Aorta (tissue), 5 donors: ENCODE measurements at regions of chr17 and their contacts with region 1.

Region 1: DNA sequence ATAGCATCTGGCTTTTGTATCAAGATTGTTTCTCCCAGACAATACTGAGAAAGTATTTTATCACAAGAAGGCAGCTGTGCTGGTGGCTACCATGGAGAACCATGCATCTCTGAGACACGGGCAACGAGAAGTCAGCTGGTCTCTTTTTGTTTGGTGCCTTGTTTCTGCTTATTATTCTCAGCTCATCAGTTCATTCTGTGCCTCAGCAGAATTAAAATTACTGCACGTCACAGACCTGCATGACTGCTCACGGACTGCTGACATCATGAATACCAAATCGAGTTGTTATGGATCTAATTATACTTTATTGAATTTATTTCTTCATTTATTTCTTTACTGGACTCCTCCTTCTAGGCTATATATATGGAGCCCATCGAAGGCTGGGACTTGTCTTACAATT is 19.0 kb upstream of the PMP22 start:
- DNase-seq: no peak
- ATAC-seq: no peak
- H3K4me3 ChIP-seq: no peak overlapping the region
- H3K27ac ChIP-seq: no peak overlapping the region
- H3K4me1 ChIP-seq: no peaks in the 10 kb centered on the region
- H3K27me3 ChIP-seq: peaks cover 0 to 2% of the 10 kb centered on the region in 2 donors

Region 2: DNA sequence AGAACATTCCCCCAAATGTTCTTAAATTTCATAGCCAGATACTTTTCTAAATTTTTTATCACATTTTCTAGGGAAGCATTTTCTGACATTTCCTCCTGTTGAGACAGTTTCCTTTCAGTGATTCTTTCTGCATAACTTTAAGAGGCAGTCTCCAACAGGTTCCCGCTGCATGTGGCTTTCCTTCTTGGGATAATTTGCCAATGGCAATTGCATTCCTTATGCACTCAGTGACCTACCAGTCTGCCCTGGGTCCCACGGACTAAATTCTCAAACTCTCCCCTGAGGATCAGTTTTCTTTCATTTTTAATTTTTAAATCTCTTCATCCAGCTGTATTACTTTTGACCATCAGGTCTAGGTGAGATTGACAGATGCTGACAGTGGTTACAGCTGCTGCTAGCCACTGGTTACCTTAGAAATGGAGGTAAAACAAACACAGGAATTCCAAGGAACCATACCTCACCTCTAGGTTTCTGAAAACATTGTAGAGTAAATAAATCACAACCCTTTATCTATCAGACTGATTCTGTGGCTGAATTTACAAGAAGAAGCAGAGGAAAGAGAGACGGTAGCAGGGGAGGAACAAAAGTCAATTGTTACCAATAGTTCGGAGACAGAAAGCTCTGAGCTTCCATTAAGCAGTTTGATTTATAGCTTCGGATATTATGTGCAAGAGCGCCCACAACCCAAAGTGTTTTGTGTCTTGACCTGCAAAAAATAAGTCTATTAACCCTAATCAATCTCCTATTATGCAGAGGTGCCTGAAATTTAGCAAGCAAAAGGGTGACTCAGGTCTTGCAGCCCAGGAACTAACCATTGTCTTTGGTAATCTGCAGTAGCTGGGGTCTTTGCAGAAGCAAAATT is 234.9 kb before region 1 on chr17:
- intact Hi-C with region 1: no loop called
- DNase-seq: no peak
- ATAC-seq: no peak
- H3K4me3 ChIP-seq: no peak overlapping the region
- H3K27ac ChIP-seq: no peak overlapping the region
- H3K4me1 ChIP-seq: no peaks in the 10 kb centered on the region
- H3K27me3 ChIP-seq: no peaks in the 10 kb centered on the region

Region 3: DNA sequence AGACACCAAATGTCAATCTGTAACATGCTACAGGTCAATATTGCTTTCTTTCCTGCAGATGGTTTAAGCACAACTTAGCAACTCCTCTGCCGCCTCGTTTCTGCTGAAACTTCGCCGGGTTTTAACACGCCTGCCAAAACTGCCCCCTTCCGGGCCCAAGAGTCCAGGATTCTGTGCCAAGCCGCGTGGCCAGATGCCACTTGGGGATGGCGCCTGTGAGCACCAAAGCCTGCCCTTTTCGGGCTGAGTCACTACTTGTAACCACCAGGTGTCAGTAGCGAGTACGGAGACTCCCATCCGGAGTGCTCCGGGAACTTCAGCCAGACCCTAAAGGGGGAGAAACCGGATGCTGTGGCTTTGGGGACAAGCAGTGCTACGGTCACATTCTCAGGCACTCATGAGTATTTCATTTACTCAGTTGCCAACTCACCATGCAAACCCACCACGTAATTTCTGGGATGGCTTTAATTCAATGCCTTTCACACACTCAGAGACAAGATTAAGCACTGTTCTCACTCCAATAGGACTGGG is 26.8 kb before region 1 on chr17:
- intact Hi-C with region 1: no loop called
- DNase-seq: peak; percentile 91 to 94
- ATAC-seq: peak; percentile 73
- H3K4me3 ChIP-seq: no peak overlapping the region
- H3K27ac ChIP-seq: peak overlapping the region in 1 of 2 donors; percentile 39
- H3K4me1 ChIP-seq: peaks cover 0 to under 1% of the 10 kb centered on the region in 2 donors
- H3K27me3 ChIP-seq: no peaks in the 10 kb centered on the region

Region 4: GRCh38 chr17:15270628-15271381 is 13.3 kb before region 1 on chr17:
- intact Hi-C with region 1: loop called in 1 of 2 experiments (anchors 1 kb)
- DNase-seq: no peak
- ATAC-seq: no peak
- H3K4me3 ChIP-seq: no peak overlapping the region
- H3K27ac ChIP-seq: no peak overlapping the region
- H3K4me1 ChIP-seq: no peaks in the 10 kb centered on the region
- H3K27me3 ChIP-seq: no peaks in the 10 kb centered on the region

Region 5: DNA sequence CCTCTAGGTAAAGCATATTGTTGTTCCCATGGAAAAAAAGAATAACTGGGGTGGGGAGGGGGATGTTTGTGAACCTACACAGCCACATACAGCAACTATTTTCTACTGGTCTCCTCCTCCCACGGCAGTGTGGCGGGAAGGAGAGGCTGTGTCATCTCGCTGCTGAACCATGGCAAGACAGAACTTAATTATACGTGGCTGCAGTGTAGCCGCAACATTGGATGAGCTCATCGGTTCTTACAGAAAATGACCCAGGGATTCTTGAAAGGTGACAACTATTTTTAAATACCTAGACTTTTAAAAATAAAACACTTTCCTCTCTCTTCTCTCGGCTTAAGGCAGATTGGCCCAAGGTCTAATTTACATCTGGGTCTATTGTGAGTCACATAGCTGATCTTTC is 77.0 kb after region 1 on chr17:
- intact Hi-C with region 1: no loop called
- DNase-seq: no peak
- ATAC-seq: no peak
- H3K4me3 ChIP-seq: no peak overlapping the region
- H3K27ac ChIP-seq: no peak overlapping the region
- H3K4me1 ChIP-seq: no peaks in the 10 kb centered on the region
- H3K27me3 ChIP-seq: no peaks in the 10 kb centered on the region